ENCODE measurements at regions of chr13 and their contacts with region 1.

Region 1: GRCh38 chr13:31431722-31432137 is 232.0 kb downstream of the B3GLCT start:
- DNase-seq: no peak
- ATAC-seq: peak; percentile 37
- H3K4me3 Mint-ChIP-seq: no peak overlapping the region
- H3K27ac Mint-ChIP-seq: no peak overlapping the region
- H3K4me1 Mint-ChIP-seq: no peaks in the 10 kb centered on the region
- H3K27me3 Mint-ChIP-seq: peaks cover 5% of the 10 kb centered on the region
- CTCF ChIP-seq: peak; percentile 48

Region 2: DNA sequence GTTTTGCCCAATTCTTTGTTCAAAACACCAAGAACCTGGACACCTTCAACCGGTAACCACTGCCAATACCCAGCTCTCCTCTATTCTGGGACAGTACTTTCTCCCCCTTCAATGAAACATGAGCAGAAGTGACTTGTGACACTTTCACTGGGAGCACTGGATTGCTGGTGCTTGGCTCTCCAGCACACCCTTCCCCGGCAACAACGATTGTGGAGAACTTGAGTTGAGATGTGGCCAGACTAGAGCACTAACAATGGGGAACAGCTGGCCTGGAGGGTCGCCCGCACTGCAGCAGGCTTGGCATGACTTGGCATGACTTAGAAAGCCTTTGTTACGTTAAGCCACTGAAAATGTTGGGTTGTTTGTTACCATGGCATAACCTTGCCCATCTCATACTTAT is 239.4 kb before region 1 on chr13:
- CTCF ChIA-PET with region 1: no interaction called
- POLR2A ChIA-PET with region 1: no interaction called
- intact Hi-C with region 1: no loop called
- DNase-seq: no peak
- ATAC-seq: no peak
- H3K4me3 Mint-ChIP-seq: no peak overlapping the region
- H3K27ac Mint-ChIP-seq: no peak overlapping the region
- H3K4me1 Mint-ChIP-seq: no peaks in the 10 kb centered on the region
- H3K27me3 Mint-ChIP-seq: no peaks in the 10 kb centered on the region
- CTCF ChIP-seq: no peak

Region 3: GRCh38 chr13:31742097-31742734 is 310.5 kb after region 1 on chr13:
- CTCF ChIA-PET with region 1: interaction called, 10 read pairs
- POLR2A ChIA-PET with region 1: no interaction called
- intact Hi-C with region 1: loop called (anchors 1 kb)
- DNase-seq: peak; percentile 22
- ATAC-seq: peak; percentile 69
- H3K4me3 Mint-ChIP-seq: no peak overlapping the region
- H3K27ac Mint-ChIP-seq: no peak overlapping the region
- H3K4me1 Mint-ChIP-seq: no peaks in the 10 kb centered on the region
- H3K27me3 Mint-ChIP-seq: peaks cover 2% of the 10 kb centered on the region
- CTCF ChIP-seq: peak; percentile 90

Region 4: GRCh38 chr13:31786011-31786410 is 354.3 kb after region 1 on chr13:
- CTCF ChIA-PET with region 1: no interaction called
- POLR2A ChIA-PET with region 1: no interaction called
- intact Hi-C with region 1: no loop called
- DNase-seq: no peak
- ATAC-seq: no peak
- H3K4me3 Mint-ChIP-seq: no peak overlapping the region
- H3K27ac Mint-ChIP-seq: no peak overlapping the region
- H3K4me1 Mint-ChIP-seq: no peaks in the 10 kb centered on the region
- H3K27me3 Mint-ChIP-seq: peaks cover 4% of the 10 kb centered on the region
- CTCF ChIP-seq: no peak